ENCODE measurements at regions of chr13 and their contacts with region 1.

Region 1: DNA sequence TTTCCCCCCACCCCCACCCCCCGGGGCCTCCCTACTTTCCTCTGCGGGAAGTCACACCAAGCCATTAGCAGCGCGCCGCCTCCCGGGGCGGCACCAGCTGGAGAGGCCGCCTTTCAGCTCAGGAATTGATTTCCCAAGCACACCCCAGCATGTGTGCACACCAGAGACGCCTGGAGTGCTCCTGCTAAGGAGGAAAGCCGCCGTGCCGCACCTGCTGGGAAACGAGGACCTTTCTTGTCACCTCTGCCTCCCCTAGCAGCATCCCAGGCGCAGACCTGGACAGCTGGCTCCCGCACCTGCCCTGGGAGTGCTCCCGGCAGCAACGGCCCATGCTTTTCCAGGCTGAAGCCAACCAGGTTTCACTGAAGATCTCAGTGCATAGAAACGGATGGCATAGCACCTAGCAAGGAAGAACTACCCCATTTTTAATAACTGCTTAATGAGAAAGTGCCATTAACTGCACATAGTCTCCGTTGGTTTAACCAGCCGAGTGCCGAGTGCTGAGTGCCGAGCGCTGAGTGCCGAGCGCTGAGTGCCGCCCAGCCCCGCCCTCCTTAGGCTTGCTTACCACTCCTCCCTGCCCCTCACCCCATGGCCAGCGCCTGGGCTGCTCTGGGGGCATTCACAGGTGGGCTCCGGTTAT is 165.0 kb downstream of the USP12 start:
- DNase-seq: no peak
- ATAC-seq: peak; percentile 90
- H3K4me3 ChIP-seq: peak overlapping the region; percentile 32 to 55
- H3K27ac ChIP-seq: peak overlapping the region; percentile 92
- H3K4me1 ChIP-seq: peaks cover 26% of the 10 kb centered on the region
- H3K27me3 ChIP-seq: no peaks in the 10 kb centered on the region
- CTCF ChIP-seq: no peak

Region 2: GRCh38 chr13:27257233-27257568 is 250.6 kb after region 1 on chr13:
- CTCF ChIA-PET with region 1: no interaction called
- POLR2A ChIA-PET with region 1: interaction called, 12 read pairs
- in situ Hi-C with region 1: no loop called
- intact Hi-C with region 1: no loop called
- DNase-seq: no peak
- ATAC-seq: no peak
- H3K4me3 ChIP-seq: no peak overlapping the region
- H3K27ac ChIP-seq: peak overlapping the region; percentile 61
- H3K4me1 ChIP-seq: peaks cover 61% of the 10 kb centered on the region
- H3K27me3 ChIP-seq: no peaks in the 10 kb centered on the region
- CTCF ChIP-seq: no peak

Measured in Panc1 (cell line).